ENCODE measurements at regions of chr22 and their contacts with region 1.

Region 1: GRCh38 chr22:31290494-31291471 is 1.5 kb downstream of the PIK3IP1 start:
- DNase-seq: peak; percentile 97
- ATAC-seq: peak; percentile 78
- H3K4me3 Mint-ChIP-seq: peak overlapping the region; percentile 90
- H3K27ac Mint-ChIP-seq: peak overlapping the region; percentile 97
- H3K4me1 Mint-ChIP-seq: peaks cover 71% of the 10 kb centered on the region
- H3K27me3 Mint-ChIP-seq: no peaks in the 10 kb centered on the region

Region 2: GRCh38 chr22:30591588-30592359 is 699.0 kb before region 1 on chr22 and contains the start of gene PES1:
- CTCF ChIA-PET with region 1: no interaction called
- POLR2A ChIA-PET with region 1: no interaction called
- intact Hi-C with region 1: loop called in 1 of 2 experiments (anchors 5 kb)
- DNase-seq: peak; percentile 96
- ATAC-seq: peak; percentile 100
- H3K4me3 Mint-ChIP-seq: no peak within 1 kb of the TSS
- H3K27ac Mint-ChIP-seq: no peak within 1 kb of the TSS
- H3K4me1 Mint-ChIP-seq: no peaks in the 10 kb centered on the region
- H3K27me3 Mint-ChIP-seq: peaks cover 4% of the 10 kb centered on the region
- total RNA-seq, gene PES1: 134 to 137 TPM

Region 3: DNA sequence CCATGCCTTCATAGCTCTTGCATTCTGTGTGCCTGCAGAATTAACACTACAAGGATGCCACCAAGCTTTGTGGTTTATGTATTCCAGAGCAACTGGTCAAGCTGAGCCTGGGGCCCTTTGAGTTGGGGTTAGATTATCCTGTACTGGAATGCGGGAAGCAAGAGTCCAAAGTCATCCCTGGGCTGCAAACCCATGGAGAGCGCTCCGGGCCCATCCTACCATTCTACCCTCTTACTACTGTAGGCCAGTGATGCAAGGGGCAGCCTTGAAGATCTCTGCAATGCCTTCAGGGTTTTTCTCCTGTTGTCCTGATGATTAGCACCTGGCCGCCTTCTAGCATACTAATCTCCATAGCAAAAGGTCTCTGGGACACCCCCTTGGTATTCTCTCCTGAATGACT is 270.4 kb before region 1 on chr22:
- CTCF ChIA-PET with region 1: no interaction called
- POLR2A ChIA-PET with region 1: no interaction called
- intact Hi-C with region 1: no loop called
- DNase-seq: no peak
- ATAC-seq: no peak
- H3K4me3 Mint-ChIP-seq: no peak overlapping the region
- H3K27ac Mint-ChIP-seq: no peak overlapping the region
- H3K4me1 Mint-ChIP-seq: no peaks in the 10 kb centered on the region
- H3K27me3 Mint-ChIP-seq: no peaks in the 10 kb centered on the region

Region 4: GRCh38 chr22:31080848-31081649 is 209.7 kb before region 1 on chr22 and contains the start of gene SMTN:
- CTCF ChIA-PET with region 1: interaction called, 3 read pairs
- POLR2A ChIA-PET with region 1: interaction called, 12 read pairs
- intact Hi-C with region 1: loop called (anchors 1 to 2 kb)
- DNase-seq: peak; percentile 92
- ATAC-seq: peak; percentile 67
- H3K4me3 Mint-ChIP-seq: peak within 1 kb of the TSS; percentile 82
- H3K27ac Mint-ChIP-seq: peak within 1 kb of the TSS; percentile 63
- H3K4me1 Mint-ChIP-seq: peaks cover 30% of the 10 kb centered on the region
- H3K27me3 Mint-ChIP-seq: no peaks in the 10 kb centered on the region
- total RNA-seq, gene SMTN: 40.1 to 45.8 TPM

Region 5: GRCh38 chr22:31130873-31131272 is 159.9 kb before region 1 on chr22:
- CTCF ChIA-PET with region 1: no interaction called
- POLR2A ChIA-PET with region 1: no interaction called
- intact Hi-C with region 1: no loop called
- DNase-seq: no peak
- ATAC-seq: no peak
- H3K4me3 Mint-ChIP-seq: no peak overlapping the region
- H3K27ac Mint-ChIP-seq: no peak overlapping the region
- H3K4me1 Mint-ChIP-seq: no peaks in the 10 kb centered on the region
- H3K27me3 Mint-ChIP-seq: no peaks in the 10 kb centered on the region

Region 6: DNA sequence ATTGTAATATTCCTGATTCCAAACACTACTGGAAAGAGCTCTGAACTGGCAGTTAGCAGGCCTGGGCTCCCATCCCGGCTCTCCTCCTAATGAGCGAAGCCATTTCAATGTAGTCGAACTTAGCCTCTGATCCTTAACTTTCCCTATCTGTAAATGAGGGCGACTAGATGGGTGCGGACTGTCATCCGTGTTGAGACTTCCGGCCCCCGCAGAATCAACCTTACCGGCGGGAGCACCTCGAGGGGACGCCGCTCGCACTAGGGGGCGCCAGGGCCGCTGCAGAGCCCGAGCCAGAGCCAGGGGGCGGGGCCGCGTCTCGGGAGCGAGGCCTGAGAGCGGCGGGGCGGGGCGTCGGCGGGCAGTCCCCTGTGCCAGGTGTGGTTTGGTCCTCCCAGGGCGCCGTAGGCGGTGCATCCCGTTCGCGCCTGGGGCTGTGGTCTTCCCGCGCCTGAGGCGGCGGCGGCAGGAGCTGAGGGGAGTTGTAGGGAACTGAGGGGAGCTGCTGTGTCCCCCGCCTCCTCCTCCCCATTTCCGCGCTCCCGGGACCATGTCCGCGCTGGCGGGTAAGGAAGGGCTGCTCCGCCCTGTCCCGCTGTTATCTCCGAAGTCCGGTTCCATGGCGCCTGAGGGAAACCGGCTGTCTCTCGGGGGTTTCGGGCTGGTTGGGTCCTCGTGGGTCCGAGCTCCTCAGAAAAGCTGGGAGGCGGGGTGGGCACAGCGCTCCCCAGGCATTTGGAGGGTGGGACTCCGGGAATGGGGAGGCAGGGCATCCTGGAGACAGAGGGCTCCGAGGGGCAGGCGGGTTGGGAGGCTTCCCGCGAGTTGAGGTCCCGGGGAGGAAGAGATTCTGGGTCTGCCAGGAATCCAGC is 78.7 kb before region 1 on chr22 and contains the start of gene LIMK2:
- CTCF ChIA-PET with region 1: interaction called, 9 read pairs
- POLR2A ChIA-PET with region 1: interaction called, 4 read pairs
- intact Hi-C with region 1: loop called (anchors 1 to 5 kb)
- DNase-seq: peak; percentile 99
- ATAC-seq: peak; percentile 97
- H3K4me3 Mint-ChIP-seq: peak within 1 kb of the TSS; percentile 85
- H3K27ac Mint-ChIP-seq: peak within 1 kb of the TSS; percentile 92
- H3K4me1 Mint-ChIP-seq: peaks cover 45% of the 10 kb centered on the region
- H3K27me3 Mint-ChIP-seq: no peaks in the 10 kb centered on the region
- total RNA-seq, gene LIMK2: 31.8 to 34.4 TPM

Region 7: GRCh38 chr22:31313366-31314147 is 22.8 kb after region 1 on chr22:
- CTCF ChIA-PET with region 1: interaction called, 80 read pairs
- POLR2A ChIA-PET with region 1: interaction called, 10 read pairs
- intact Hi-C with region 1: no loop called
- DNase-seq: peak; percentile 82
- ATAC-seq: peak; percentile 88
- H3K4me3 Mint-ChIP-seq: no peak overlapping the region
- H3K27ac Mint-ChIP-seq: no peak overlapping the region
- H3K4me1 Mint-ChIP-seq: peaks cover 22% of the 10 kb centered on the region
- H3K27me3 Mint-ChIP-seq: no peaks in the 10 kb centered on the region

Region 8: DNA sequence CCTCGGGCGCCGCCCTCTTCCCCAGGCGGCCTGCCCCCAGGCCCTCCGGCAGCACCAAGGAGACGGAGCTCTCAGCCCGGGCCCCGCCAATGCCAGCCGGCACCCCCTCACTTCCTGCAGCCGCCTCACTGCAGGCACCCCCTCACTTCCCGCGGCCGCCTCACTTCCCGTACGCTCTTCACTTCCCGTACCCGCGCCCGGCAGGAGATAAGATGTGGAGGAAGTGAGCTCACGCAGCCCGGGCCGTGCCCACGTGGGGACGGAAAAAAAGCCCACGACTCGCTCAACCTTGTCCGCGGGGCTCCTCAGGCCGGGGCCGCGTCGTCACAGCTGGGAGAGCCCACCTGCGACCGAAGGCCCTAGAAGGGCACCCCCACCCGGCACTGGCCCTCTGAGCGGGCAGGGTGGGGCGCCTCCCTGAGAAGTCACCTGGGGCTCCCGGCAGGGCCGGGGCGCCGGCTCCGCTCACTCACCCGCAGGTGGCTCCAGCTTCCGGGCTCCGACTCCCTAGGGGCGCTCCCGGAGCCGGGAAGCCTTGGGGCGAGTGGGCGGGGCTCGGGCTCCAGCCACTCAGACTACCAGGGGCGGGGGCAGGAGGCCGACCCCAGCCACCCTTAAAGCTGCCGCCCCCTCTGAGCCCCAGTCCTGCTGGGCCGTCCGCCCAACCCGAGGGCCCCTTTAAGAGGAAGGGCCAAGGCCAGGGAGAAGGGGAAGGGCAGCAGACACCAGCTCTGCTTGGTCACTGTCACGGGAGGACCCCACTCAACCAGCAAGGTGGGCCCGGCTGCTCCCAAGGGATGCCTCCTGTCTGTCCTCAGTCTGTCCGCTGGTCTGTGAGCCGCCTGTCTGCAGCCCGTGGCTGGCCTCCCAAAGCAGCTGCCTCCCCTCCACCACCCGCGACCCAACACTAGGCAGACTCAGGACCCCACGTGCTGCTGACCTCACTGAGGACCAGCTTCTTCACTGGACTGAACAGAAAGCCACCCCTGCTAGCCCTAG is 339.8 kb after region 1 on chr22:
- CTCF ChIA-PET with region 1: interaction called, 4 read pairs
- POLR2A ChIA-PET with region 1: no interaction called
- intact Hi-C with region 1: loop called in 1 of 2 experiments (anchors 5 kb)
- DNase-seq: peak; percentile 93
- ATAC-seq: peak; percentile 82
- H3K4me3 Mint-ChIP-seq: peak overlapping the region; percentile 81
- H3K27ac Mint-ChIP-seq: peak overlapping the region; percentile 89
- H3K4me1 Mint-ChIP-seq: peaks cover 60% of the 10 kb centered on the region
- H3K27me3 Mint-ChIP-seq: no peaks in the 10 kb centered on the region